Activated T-helper 1 cell treated with anti-CD3 and anti-CD28 coated beads, Interleukin-12 subunit alpha, Interleukin-12 subunit beta, Interleukin-2, Interleukin-4 antibody, amounts not matched to agents 30 ng/mL and 10 ng/mL and 1 ng/mL, durations not matched to agents 14 hours and 24 hours and 36 hours (primary cell): ENCODE measurements at regions of chr17 and their contacts with region 1.

Region 1: GRCh38 chr17:44775136-44775837 is 16.5 kb downstream of the ADAM11 start:
- DNase-seq: peak; percentile 95
- H3K4me3 Mint-ChIP-seq: peak overlapping the region; percentile 89
- H3K27ac Mint-ChIP-seq: peak overlapping the region; percentile 52
- H3K4me1 Mint-ChIP-seq: no peaks in the 10 kb centered on the region
- H3K27me3 Mint-ChIP-seq: peaks cover 11% of the 10 kb centered on the region

Region 2: GRCh38 chr17:44689477-44690217 is 85.6 kb before region 1 on chr17 and contains the start of gene CCDC43:
- intact Hi-C with region 1: loop called (anchors 1 kb)
- DNase-seq: peak; percentile 91
- H3K4me3 Mint-ChIP-seq: peak within 1 kb of the TSS; percentile 99
- H3K27ac Mint-ChIP-seq: peak within 1 kb of the TSS; percentile 89
- H3K4me1 Mint-ChIP-seq: peaks cover 32% of the 10 kb centered on the region
- H3K27me3 Mint-ChIP-seq: no peaks in the 10 kb centered on the region
- total RNA-seq, gene CCDC43: 42.6 and 44.6 TPM in 2 replicates

Region 3: GRCh38 chr17:44829523-44830358 is 54.5 kb after region 1 on chr17 and contains the start of gene GJC1:
- intact Hi-C with region 1: loop called (anchors 1 kb)
- DNase-seq: no peak
- H3K4me3 Mint-ChIP-seq: peak within 1 kb of the TSS; percentile 82
- H3K27ac Mint-ChIP-seq: peak within 1 kb of the TSS; percentile 44
- H3K4me1 Mint-ChIP-seq: peaks cover 7% of the 10 kb centered on the region
- H3K27me3 Mint-ChIP-seq: peaks cover 62% of the 10 kb centered on the region
- total RNA-seq, gene GJC1: 4.7 and 5.7 TPM in 2 replicates

Region 4: DNA sequence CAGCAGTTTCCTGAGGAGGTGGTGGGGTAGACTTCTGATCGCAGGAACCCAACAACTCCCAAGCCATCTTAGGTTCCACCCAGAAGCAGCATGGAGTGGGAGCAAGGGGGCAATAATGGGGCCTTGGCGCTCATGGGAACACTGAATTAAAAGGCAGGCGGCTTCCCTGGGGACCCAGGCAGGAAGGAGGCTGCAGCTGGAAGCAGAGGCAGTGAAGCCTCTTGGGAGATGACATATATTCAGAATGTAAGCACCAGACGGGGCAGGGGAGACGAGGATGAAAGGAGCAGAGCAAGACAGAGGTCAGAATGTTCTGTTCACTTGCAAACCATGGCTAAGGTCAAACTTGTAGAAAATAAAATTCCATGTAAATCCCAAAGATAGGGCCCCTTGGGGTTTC is 75.3 kb after region 1 on chr17:
- intact Hi-C with region 1: no loop called
- DNase-seq: no peak
- H3K4me3 Mint-ChIP-seq: no peak overlapping the region
- H3K27ac Mint-ChIP-seq: no peak overlapping the region
- H3K4me1 Mint-ChIP-seq: no peaks in the 10 kb centered on the region
- H3K27me3 Mint-ChIP-seq: no peaks in the 10 kb centered on the region

Region 5: DNA sequence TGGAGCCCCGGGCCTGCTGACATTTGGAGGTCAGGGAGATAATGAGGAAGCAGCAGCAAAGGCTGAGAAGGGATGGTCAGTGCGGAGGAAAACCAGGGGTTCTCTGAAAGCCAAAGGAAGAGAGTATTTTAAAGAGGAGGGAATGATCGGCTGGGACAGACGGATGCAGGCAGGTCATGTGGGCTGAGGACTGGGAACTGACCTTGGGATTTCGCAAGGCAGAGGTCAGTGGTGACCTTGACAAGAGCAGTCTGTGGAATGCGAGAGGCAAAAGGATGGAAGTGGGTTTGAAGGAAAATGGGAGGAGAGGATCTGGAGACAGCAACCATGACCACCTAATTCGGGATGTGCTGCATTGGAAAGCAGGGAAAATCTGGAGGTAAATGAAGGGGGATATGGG is 113.7 kb after region 1 on chr17:
- intact Hi-C with region 1: no loop called
- DNase-seq: no peak
- H3K4me3 Mint-ChIP-seq: no peak overlapping the region
- H3K27ac Mint-ChIP-seq: no peak overlapping the region
- H3K4me1 Mint-ChIP-seq: peaks cover 5% of the 10 kb centered on the region
- H3K27me3 Mint-ChIP-seq: no peaks in the 10 kb centered on the region

Region 6: GRCh38 chr17:44899069-44899782 is 123.9 kb after region 1 on chr17 and contains the start of gene EFTUD2:
- intact Hi-C with region 1: loop called (anchors 1 kb)
- DNase-seq: peak; percentile 88
- H3K4me3 Mint-ChIP-seq: peak within 1 kb of the TSS; percentile 97
- H3K27ac Mint-ChIP-seq: peak within 1 kb of the TSS; percentile 98
- H3K4me1 Mint-ChIP-seq: peaks cover 30% of the 10 kb centered on the region
- H3K27me3 Mint-ChIP-seq: peaks cover 12% of the 10 kb centered on the region
- total RNA-seq, gene EFTUD2: 206 and 219 TPM in 2 replicates

Region 7: DNA sequence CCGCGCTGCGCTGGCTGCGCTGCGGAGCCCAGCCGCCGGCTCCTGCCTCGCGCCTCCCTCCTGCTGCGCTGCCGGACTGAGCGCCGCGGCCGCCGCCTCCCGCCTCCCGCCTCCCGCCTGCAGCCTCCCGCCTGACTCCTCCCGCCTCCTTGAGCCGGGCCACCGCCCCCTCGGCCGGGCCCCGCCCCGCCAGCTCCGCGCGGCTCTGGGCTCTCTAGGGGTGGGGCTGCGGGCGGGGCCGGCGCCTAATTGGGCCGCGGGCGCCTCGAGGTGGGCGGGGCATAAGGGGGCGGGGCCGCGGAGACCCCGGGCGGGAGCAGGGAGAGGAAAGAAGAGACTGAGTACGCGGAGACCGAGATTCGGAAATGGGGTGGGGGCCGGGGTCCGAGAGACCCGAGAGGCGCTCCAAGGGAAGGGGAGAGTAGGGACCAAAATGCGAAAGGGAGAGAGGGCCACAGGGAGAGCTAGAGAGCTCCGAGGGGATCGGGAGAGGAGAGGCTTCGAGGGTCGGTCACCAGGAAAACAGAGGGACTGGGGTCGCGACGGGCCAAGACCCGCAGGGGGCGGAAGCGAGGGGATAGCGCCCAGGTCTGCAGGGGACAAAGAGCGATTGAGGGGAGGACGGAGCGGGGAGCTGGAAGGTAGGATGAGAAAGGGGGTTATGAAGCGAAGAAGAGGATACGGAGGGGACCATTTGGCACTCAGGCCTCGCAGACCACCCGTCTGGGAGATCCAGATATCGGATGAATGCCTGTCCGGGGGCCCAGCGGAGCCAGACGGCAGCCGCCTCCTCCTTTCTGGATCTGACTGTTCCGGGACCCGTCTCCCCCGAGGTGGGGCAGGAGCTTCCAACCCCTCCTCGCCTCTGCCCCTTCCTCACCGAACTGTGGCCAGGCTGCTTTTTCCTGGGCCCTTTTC is 193.2 kb after region 1 on chr17 and contains the start of gene C1QL1:
- intact Hi-C with region 1: loop called (anchors 1 kb)
- DNase-seq: peak; percentile 86
- H3K4me3 Mint-ChIP-seq: peak within 1 kb of the TSS; percentile 78
- H3K27ac Mint-ChIP-seq: no peak within 1 kb of the TSS
- H3K4me1 Mint-ChIP-seq: peaks cover 38% of the 10 kb centered on the region
- H3K27me3 Mint-ChIP-seq: peaks cover 67% of the 10 kb centered on the region
- total RNA-seq, gene C1QL1: 0.39 and 0.54 TPM in 2 replicates

Region 8: DNA sequence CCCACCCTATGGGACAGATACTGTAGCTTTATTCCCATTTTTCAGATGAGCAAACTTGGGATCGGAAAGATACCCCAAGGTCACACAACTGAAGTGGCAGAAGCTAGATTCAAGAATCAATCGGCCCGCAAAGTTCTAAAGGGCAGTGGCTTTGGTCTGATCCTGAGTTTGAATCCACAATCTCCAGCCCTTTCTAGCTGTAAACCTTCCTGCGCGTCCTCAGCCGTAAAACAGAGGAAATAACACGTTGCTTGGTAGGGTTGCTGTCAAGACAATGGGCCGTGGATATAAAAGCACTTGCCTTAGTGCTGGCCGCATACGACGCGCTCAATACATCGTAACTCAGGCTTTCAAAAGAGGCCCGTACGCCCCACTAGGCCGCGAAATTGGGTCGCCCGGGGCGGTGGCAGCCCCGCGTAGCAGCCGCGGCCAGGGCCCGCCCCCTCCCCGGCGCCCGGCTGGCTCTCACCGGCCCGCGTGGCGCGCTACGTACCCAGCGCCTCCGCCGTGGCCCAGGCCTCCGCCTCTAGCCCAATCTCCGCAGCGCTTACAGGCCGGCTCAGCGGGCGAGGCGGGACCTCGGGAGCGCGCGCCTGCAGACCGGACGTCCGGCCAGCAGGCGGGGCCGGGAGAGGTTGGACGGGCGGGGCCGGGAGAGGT is 275.9 kb after region 1 on chr17 and contains the start of gene DCAKD:
- intact Hi-C with region 1: loop called (anchors 1 kb)
- DNase-seq: peak; percentile 93
- H3K4me3 Mint-ChIP-seq: peak within 1 kb of the TSS; percentile 92
- H3K27ac Mint-ChIP-seq: peak within 1 kb of the TSS; percentile 94
- H3K4me1 Mint-ChIP-seq: peaks cover 47% of the 10 kb centered on the region
- H3K27me3 Mint-ChIP-seq: no peaks in the 10 kb centered on the region
- total RNA-seq, gene DCAKD: 24.0 and 24.9 TPM in 2 replicates